Activated CD8-positive, alpha-beta T cell treated with anti-CD3 and anti-CD28 coated beads for 36 hours (primary cell): ENCODE measurements at regions of chr2 and their contacts with region 1.

Region 1: GRCh38 chr2:3780477-3781402 is 77.4 kb downstream of the DCDC2C start:
- DNase-seq: peak; percentile 85
- ATAC-seq: peak; percentile 100
- H3K4me3 Mint-ChIP-seq: peak overlapping the region; percentile 24
- H3K27ac Mint-ChIP-seq: peak overlapping the region; percentile 48
- H3K4me1 Mint-ChIP-seq: peaks cover 5% of the 10 kb centered on the region
- H3K27me3 Mint-ChIP-seq: peaks cover 13% of the 10 kb centered on the region
- CTCF ChIP-seq: peak; percentile 55

Region 2: GRCh38 chr2:3728104-3729054 is 52.4 kb before region 1 on chr2:
- CTCF ChIA-PET with region 1: interaction called, 51 read pairs
- POLR2A ChIA-PET with region 1: no interaction called
- intact Hi-C with region 1: loop called (anchors 2 kb)
- DNase-seq: no peak
- ATAC-seq: no peak
- H3K4me3 Mint-ChIP-seq: no peak overlapping the region
- H3K27ac Mint-ChIP-seq: no peak overlapping the region
- H3K4me1 Mint-ChIP-seq: no peaks in the 10 kb centered on the region
- H3K27me3 Mint-ChIP-seq: peaks cover 1% of the 10 kb centered on the region
- CTCF ChIP-seq: peak; percentile 64

Region 3: DNA sequence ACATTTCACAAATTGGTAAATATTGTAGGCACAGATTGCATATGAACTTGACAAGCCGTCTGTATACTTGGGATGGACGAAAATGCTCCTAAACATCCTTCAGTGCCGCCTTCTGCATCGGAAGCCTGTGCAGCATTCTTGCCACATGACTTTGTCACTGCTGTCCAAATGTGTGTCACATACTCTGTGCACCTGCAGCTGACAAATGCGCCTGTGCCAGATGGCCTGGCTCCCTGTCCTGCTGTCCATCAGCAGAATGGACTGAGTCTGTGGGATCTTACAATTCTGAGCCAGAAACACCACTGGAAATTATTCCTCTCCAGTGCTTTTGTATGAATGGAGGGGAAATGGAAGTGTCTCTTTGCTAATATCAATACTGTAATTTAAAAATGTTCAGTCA is 12.5 kb after region 1 on chr2:
- CTCF ChIA-PET with region 1: interaction called, 10 read pairs
- POLR2A ChIA-PET with region 1: no interaction called
- intact Hi-C with region 1: no loop called
- DNase-seq: no peak
- ATAC-seq: no peak
- H3K4me3 Mint-ChIP-seq: no peak overlapping the region
- H3K27ac Mint-ChIP-seq: no peak overlapping the region
- H3K4me1 Mint-ChIP-seq: no peaks in the 10 kb centered on the region
- H3K27me3 Mint-ChIP-seq: no peaks in the 10 kb centered on the region
- CTCF ChIP-seq: no peak